CD8-positive, alpha-beta T cell (primary cell): ENCODE measurements at regions of chr5 and their contacts with region 1.

Region 1: DNA sequence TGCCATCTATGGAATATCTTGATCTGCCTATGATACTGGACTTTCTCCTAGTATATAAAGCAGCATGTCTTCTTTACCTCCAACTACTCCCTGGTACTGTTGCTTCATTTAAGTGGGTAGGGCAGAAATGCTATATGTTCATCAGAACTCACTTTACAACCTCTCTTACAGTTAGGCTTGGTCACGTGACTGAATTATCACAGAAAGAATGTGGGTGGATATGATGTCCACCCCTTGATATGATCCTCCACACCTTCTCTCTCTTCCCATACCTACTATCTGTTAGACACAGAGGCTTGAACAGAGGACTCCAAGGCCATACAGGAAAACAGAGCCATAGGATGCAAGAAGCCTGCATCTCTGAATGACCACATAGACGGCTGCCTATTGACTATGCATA is 19.8 kb downstream of the CRHBP start:
- DNase-seq: no peak
- ATAC-seq: no peak
- H3K4me3 ChIP-seq: no peak overlapping the region
- H3K4me3 Mint-ChIP-seq: no peak overlapping the region
- H3K27ac ChIP-seq: no peak overlapping the region
- H3K27ac Mint-ChIP-seq: no peak overlapping the region
- H3K4me1 ChIP-seq: no peaks in the 10 kb centered on the region
- H3K4me1 Mint-ChIP-seq: no peaks in the 10 kb centered on the region
- H3K27me3 ChIP-seq: no peaks in the 10 kb centered on the region
- H3K27me3 Mint-ChIP-seq: peaks cover 15% of the 10 kb centered on the region
- CTCF ChIP-seq: no peak

Region 2: DNA sequence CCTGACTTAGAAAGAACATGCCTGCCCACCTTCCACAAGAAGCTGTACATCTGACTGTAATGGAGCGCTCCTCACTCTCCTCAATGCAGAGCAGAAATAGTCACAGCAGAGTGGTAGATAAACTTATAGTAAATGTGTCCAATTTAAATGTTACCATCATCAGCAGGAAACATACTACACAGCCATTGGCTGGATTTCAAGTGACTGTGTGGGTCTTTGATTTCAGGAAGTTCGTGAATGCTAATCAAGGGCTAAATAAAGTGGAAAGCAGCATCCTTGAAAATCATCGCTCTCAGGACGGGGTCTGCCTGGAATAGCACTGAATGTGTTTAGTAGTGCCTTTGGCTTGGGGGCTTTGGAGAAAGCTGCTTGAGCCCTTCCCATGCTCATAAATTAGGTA is 52.2 kb before region 1 on chr5:
- CTCF ChIA-PET with region 1: no interaction called
- POLR2A ChIA-PET with region 1: no interaction called
- intact Hi-C with region 1: no loop called
- DNase-seq: no peak
- ATAC-seq: no peak
- H3K4me3 ChIP-seq: no peak overlapping the region
- H3K4me3 Mint-ChIP-seq: no peak overlapping the region
- H3K27ac ChIP-seq: no peak overlapping the region
- H3K27ac Mint-ChIP-seq: no peak overlapping the region
- H3K4me1 ChIP-seq: no peaks in the 10 kb centered on the region
- H3K4me1 Mint-ChIP-seq: no peaks in the 10 kb centered on the region
- H3K27me3 ChIP-seq: no peaks in the 10 kb centered on the region
- H3K27me3 Mint-ChIP-seq: no peaks in the 10 kb centered on the region
- CTCF ChIP-seq: no peak

Region 3: GRCh38 chr5:76942581-76942980 is 30.1 kb before region 1 on chr5:
- CTCF ChIA-PET with region 1: no interaction called
- POLR2A ChIA-PET with region 1: no interaction called
- intact Hi-C with region 1: loop called in 1 of 2 experiments (anchors 1 kb)
- DNase-seq: no peak
- ATAC-seq: no peak
- H3K4me3 ChIP-seq: no peak overlapping the region
- H3K4me3 Mint-ChIP-seq: no peak overlapping the region
- H3K27ac ChIP-seq: no peak overlapping the region
- H3K27ac Mint-ChIP-seq: no peak overlapping the region
- H3K4me1 ChIP-seq: no peaks in the 10 kb centered on the region
- H3K4me1 Mint-ChIP-seq: no peaks in the 10 kb centered on the region
- H3K27me3 ChIP-seq: no peaks in the 10 kb centered on the region
- H3K27me3 Mint-ChIP-seq: peaks cover 14% of the 10 kb centered on the region
- CTCF ChIP-seq: no peak

Region 4: DNA sequence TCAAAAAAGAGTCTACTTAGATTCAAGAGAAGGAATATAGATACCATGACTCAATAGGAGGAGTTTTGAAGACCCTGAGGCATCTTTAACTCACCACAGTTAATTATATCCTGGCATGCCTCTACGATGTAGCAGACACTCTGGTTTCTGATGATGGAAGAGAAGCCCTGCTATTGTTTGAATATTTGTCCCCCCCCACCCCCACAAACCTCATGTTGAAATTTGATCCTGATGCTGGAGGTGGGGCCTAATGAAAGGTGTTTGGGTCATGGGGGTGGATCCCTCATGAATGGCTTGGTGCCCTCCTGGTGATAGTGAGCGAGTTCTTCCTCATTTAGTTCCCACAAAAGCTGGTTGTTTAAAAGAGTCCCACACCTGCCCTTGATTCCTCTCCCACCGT is 951.4 kb after region 1 on chr5:
- CTCF ChIA-PET with region 1: no interaction called
- POLR2A ChIA-PET with region 1: no interaction called
- intact Hi-C with region 1: no loop called
- DNase-seq: no peak
- ATAC-seq: no peak
- H3K4me3 ChIP-seq: no peak overlapping the region
- H3K4me3 Mint-ChIP-seq: no peak overlapping the region
- H3K27ac ChIP-seq: no peak overlapping the region
- H3K27ac Mint-ChIP-seq: no peak overlapping the region
- H3K4me1 ChIP-seq: no peaks in the 10 kb centered on the region
- H3K4me1 Mint-ChIP-seq: no peaks in the 10 kb centered on the region
- H3K27me3 ChIP-seq: peaks cover 0 to 4% of the 10 kb centered on the region in 2 experiments
- H3K27me3 Mint-ChIP-seq: peaks cover 17% of the 10 kb centered on the region
- CTCF ChIP-seq: no peak